ENCODE measurements at regions of chr7 and their contacts with region 1.

Region 1: GRCh38 chr7:101138213-101138870 is 11.4 kb downstream of the SERPINE1 start:
- DNase-seq: peak; percentile 49
- ATAC-seq: peak; percentile 93
- H3K4me3 Mint-ChIP-seq: peak overlapping the region; percentile 70
- H3K27ac Mint-ChIP-seq: peak overlapping the region; percentile 80
- H3K4me1 Mint-ChIP-seq: peaks cover 26% of the 10 kb centered on the region
- H3K27me3 Mint-ChIP-seq: peaks cover 21% of the 10 kb centered on the region
- CTCF ChIP-seq: peak; percentile 66

Region 2: DNA sequence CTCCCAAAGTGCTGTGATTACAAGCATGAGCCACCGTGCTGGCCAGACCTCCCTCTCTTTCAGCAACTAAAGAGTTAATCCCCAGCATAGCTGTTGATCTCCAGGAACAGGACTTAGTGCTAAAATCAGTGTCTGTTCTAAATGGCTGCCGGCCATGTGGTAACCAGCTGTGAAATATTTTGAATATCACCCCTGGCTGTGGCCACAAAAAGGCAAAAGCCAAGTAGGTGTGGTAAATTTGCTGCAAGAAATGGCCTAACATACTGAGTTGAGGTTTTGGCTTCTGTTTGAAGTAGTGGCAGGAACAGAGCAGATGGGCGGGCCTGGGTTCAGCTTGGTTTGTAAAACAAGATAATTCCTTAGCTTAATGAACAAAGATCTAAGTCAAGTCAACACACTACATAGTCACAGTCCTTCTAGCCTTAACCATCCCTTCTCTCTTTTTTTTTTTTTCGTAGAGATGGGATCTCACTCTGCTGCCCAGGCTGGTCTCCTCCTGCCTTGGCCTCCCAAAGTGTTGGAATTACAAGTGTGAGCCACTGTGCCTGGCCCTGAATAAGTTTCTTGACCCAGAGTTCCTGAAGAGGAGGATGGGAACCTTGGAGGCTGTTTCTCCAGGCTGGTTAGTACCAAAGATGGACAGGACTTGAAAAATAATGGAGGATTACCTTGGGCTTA is 622.1 kb before region 1 on chr7:
- CTCF ChIA-PET with region 1: no interaction called
- POLR2A ChIA-PET with region 1: no interaction called
- intact Hi-C with region 1: no loop called
- DNase-seq: no peak
- ATAC-seq: peak; percentile 37
- H3K4me3 Mint-ChIP-seq: no peak overlapping the region
- H3K27ac Mint-ChIP-seq: no peak overlapping the region
- H3K4me1 Mint-ChIP-seq: peaks cover 9% of the 10 kb centered on the region
- H3K27me3 Mint-ChIP-seq: peaks cover 2% of the 10 kb centered on the region
- CTCF ChIP-seq: no peak

Region 3: DNA sequence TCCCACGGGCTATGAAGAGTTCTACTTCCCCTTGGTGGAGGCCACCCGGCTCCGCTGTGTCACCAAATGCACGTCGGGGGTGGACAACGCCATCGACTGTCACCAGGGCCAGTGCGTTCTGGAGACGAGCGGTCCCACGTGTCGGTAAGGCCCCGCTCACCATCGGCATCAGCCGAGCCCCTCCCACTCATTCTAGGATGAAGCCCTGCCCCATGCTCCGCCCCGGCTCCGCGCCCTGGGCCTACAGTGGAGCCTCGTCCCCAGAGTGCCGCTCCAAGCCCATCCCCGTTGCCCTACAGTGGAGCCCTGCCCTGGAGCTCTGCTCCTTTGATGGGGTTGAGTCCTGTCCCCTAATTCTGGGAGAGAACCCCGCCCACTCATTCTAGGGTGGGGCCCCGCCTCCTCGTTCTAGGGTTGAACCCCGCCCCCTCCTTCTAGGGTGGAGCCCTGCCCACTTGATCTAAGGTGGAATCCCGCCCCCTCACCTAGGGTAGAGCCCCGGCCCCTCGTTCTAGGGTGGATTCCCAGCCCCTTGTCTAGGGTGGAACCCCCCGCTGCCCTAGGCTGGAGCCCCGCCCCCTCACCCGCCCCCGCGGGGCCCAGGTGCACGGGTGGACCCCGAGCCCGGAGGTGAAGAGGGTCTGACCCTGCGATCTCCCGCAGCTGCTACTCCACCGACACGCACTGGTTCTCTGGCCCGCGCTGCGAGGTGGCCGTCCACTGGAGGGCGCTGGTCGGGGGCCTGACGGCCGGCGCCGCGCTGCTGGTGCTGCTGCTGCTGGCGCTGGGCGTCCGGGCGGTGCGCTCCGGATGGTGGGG is 172.4 kb before region 1 on chr7:
- CTCF ChIA-PET with region 1: no interaction called
- POLR2A ChIA-PET with region 1: no interaction called
- intact Hi-C with region 1: loop called (anchors 1 kb)
- DNase-seq: peak; percentile 53
- ATAC-seq: peak; percentile 64
- H3K4me3 Mint-ChIP-seq: peak overlapping the region; percentile 68
- H3K27ac Mint-ChIP-seq: no peak overlapping the region
- H3K4me1 Mint-ChIP-seq: peaks cover 17% of the 10 kb centered on the region
- H3K27me3 Mint-ChIP-seq: peaks cover 59% of the 10 kb centered on the region
- CTCF ChIP-seq: no peak

Region 4: GRCh38 chr7:101066141-101066832 is 72.1 kb before region 1 on chr7:
- CTCF ChIA-PET with region 1: no interaction called
- POLR2A ChIA-PET with region 1: no interaction called
- intact Hi-C with region 1: no loop called
- DNase-seq: no peak
- ATAC-seq: no peak
- H3K4me3 Mint-ChIP-seq: no peak overlapping the region
- H3K27ac Mint-ChIP-seq: no peak overlapping the region
- H3K4me1 Mint-ChIP-seq: no peaks in the 10 kb centered on the region
- H3K27me3 Mint-ChIP-seq: peaks cover 29% of the 10 kb centered on the region
- CTCF ChIP-seq: no peak

Region 5: GRCh38 chr7:101085162-101085987 is 53.0 kb before region 1 on chr7 and contains the start of gene TRIM56:
- CTCF ChIA-PET with region 1: no interaction called
- POLR2A ChIA-PET with region 1: interaction called, 4 read pairs
- intact Hi-C with region 1: loop called (anchors 1 kb)
- DNase-seq: peak; percentile 69
- ATAC-seq: peak; percentile 99
- H3K4me3 Mint-ChIP-seq: peak within 1 kb of the TSS; percentile 99
- H3K27ac Mint-ChIP-seq: peak within 1 kb of the TSS; percentile 97
- H3K4me1 Mint-ChIP-seq: peaks cover 24% of the 10 kb centered on the region
- H3K27me3 Mint-ChIP-seq: no peaks in the 10 kb centered on the region
- CTCF ChIP-seq: no peak
- total RNA-seq, gene TRIM56: 53.0 and 57.5 TPM in 2 replicates

Region 6: GRCh38 chr7:101153969-101154692 is 15.8 kb after region 1 on chr7 and contains the start of gene AP1S1:
- CTCF ChIA-PET with region 1: interaction called, 20 read pairs
- POLR2A ChIA-PET with region 1: interaction called, 3 read pairs
- intact Hi-C with region 1: loop called (anchors 1 kb)
- DNase-seq: peak; percentile 83
- ATAC-seq: peak; percentile 94
- H3K4me3 Mint-ChIP-seq: peak within 1 kb of the TSS; percentile 83
- H3K27ac Mint-ChIP-seq: peak within 1 kb of the TSS; percentile 74
- H3K4me1 Mint-ChIP-seq: peaks cover 13% of the 10 kb centered on the region
- H3K27me3 Mint-ChIP-seq: peaks cover 6% of the 10 kb centered on the region
- CTCF ChIP-seq: no peak
- total RNA-seq, gene AP1S1: 19.2 and 22.7 TPM in 2 replicates

Region 7: GRCh38 chr7:101185258-101185839 is 47.0 kb after region 1 on chr7:
- CTCF ChIA-PET with region 1: interaction called, 111 read pairs
- POLR2A ChIA-PET with region 1: interaction called, 4 read pairs
- intact Hi-C with region 1: no loop called
- DNase-seq: no peak
- ATAC-seq: no peak
- H3K4me3 Mint-ChIP-seq: no peak overlapping the region
- H3K27ac Mint-ChIP-seq: no peak overlapping the region
- H3K4me1 Mint-ChIP-seq: peaks cover 6% of the 10 kb centered on the region
- H3K27me3 Mint-ChIP-seq: peaks cover 21% of the 10 kb centered on the region
- CTCF ChIP-seq: no peak

Region 8: GRCh38 chr7:101278461-101279292 is 140.3 kb after region 1 on chr7:
- CTCF ChIA-PET with region 1: interaction called, 17 read pairs
- POLR2A ChIA-PET with region 1: interaction called, 3 read pairs
- intact Hi-C with region 1: no loop called
- DNase-seq: no peak
- ATAC-seq: no peak
- H3K4me3 Mint-ChIP-seq: no peak overlapping the region
- H3K27ac Mint-ChIP-seq: no peak overlapping the region
- H3K4me1 Mint-ChIP-seq: peaks cover 5% of the 10 kb centered on the region
- H3K27me3 Mint-ChIP-seq: peaks cover 15% of the 10 kb centered on the region
- CTCF ChIP-seq: no peak

Measured in activated B cell treated with CpG ODN at 0.5 μM for 24 hours (primary cell).